PC-3 (cell line): ENCODE measurements at regions of chr20 and their contacts with region 1.

Region 1: GRCh38 chr20:53738039-53738944 is 144.7 kb upstream of the ZNF217 start:
- DNase-seq: peak; percentile 98
- ATAC-seq: peak; percentile 74
- H3K4me3 ChIP-seq: peak overlapping the region; percentile 61
- H3K27ac ChIP-seq: peak overlapping the region; percentile 87
- H3K4me1 ChIP-seq: peaks cover 70% of the 10 kb centered on the region
- H3K27me3 ChIP-seq: no peaks in the 10 kb centered on the region
- CTCF ChIP-seq: no peak

Region 2: DNA sequence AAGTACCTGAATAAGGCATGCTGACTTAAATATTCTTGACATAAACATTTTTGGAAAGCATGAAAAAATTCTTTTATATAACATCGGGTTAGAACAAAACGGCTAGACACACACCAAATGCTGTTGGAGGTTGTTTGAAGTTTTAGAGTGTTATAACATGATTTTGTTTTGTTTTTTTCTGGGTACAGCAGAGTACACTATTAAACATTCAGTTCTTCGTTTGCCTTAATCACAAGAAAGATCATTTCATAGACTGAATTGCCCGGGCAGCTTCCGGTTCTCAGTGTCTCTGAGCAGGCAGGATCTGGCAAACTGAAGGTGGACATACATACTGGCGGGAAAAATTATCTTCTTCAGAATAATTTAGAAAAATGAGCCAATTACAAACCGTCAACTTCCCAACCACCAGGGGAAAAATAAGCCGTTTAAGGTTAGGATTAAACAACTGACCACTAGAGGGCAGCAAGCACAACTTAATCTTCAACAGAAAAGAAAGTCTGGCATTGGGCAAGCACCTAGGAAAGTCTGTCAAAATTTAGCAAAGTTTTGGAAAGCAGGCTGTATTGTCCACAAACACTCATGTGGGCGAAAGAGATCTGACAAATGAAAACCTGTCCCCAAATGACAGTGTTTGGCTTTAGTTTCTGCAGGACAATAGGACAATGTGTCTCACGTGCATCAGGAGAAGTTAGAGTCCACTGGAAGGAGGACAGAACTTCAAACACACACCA is 159.6 kb before region 1 on chr20:
- CTCF ChIA-PET with region 1: no interaction called
- POLR2A ChIA-PET with region 1: interaction called, 3 read pairs
- intact Hi-C with region 1: loop called (anchors 5 kb)
- DNase-seq: peak; percentile 100
- ATAC-seq: peak; percentile 12
- H3K4me3 ChIP-seq: peak overlapping the region; percentile 75
- H3K27ac ChIP-seq: peak overlapping the region; percentile 88
- H3K4me1 ChIP-seq: peaks cover 59% of the 10 kb centered on the region
- H3K27me3 ChIP-seq: no peaks in the 10 kb centered on the region
- CTCF ChIP-seq: peak; percentile 99

Region 3: GRCh38 chr20:53623454-53624211 is 114.7 kb before region 1 on chr20:
- CTCF ChIA-PET with region 1: interaction called, 4 read pairs
- POLR2A ChIA-PET with region 1: interaction called, 28 read pairs
- intact Hi-C with region 1: loop called (anchors 1 kb)
- DNase-seq: peak; percentile 89
- ATAC-seq: peak; percentile 62
- H3K4me3 ChIP-seq: peak overlapping the region; percentile 63
- H3K27ac ChIP-seq: peak overlapping the region; percentile 89
- H3K4me1 ChIP-seq: peaks cover 41% of the 10 kb centered on the region
- H3K27me3 ChIP-seq: no peaks in the 10 kb centered on the region
- CTCF ChIP-seq: peak; percentile 38; the same call in 1 of the 2 replicates

Region 4: DNA sequence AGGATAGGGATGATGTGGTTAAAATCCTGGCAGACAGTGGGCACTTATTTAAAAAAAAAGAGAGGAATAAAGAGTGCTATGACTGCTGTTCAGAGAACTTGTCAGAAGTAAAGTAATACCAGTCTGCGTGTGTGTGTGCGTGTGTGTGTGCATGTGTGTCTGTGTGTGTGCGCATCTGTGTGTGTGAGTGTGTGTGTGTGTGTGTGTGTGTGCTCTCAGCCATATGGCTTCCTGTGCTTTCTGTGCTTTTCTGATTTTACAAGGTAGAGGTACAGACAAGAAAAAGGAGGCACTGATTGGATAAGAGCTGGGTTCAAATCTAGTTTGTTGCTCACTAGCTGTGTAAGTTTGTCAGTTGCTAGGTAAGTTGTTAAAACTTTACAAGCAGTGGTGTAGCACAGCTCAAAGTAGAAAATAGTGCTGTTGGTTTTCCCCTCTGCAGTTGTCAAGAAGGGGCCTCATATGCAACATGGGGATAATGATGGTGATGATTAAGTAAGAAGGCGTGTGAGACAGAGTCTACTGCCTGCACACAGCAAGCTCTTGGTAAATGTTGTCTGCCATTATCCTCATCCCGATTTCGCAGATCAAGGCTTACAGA is 10.6 kb after region 1 on chr20:
- CTCF ChIA-PET with region 1: no interaction called
- POLR2A ChIA-PET with region 1: interaction called, 14 read pairs
- intact Hi-C with region 1: loop called (anchors 1 kb)
- DNase-seq: peak; percentile 58
- ATAC-seq: no peak
- H3K4me3 ChIP-seq: no peak overlapping the region
- H3K27ac ChIP-seq: peak overlapping the region; percentile 47
- H3K4me1 ChIP-seq: peaks cover 56% of the 10 kb centered on the region
- H3K27me3 ChIP-seq: no peaks in the 10 kb centered on the region
- CTCF ChIP-seq: no peak

Region 5: DNA sequence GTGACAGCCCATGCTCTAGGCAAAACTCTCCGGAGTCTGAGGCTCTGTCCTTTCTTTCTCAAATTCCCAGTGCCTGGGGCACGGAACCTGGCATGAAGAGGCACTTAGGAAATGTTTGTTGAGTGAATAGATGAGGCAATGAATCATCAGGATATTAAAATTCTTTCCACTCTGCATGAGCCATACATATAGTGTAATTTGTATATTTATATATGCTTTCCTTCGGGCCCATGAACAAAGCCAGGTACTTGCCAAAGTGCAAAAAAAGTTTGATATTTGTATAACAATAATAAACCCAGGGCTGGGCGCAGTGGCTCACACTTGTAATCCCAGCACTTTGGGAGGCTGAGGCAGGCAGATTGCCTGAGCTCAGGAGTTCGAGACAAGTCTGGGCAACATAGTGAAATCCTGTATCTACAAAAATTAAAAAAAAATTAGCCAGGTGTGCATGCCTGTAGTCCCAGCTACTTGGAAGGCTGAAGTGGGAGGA is 67.6 kb after region 1 on chr20:
- CTCF ChIA-PET with region 1: no interaction called
- POLR2A ChIA-PET with region 1: interaction called, 5 read pairs
- intact Hi-C with region 1: loop called (anchors 5 kb)
- DNase-seq: peak; percentile 100
- ATAC-seq: peak; percentile 82
- H3K4me3 ChIP-seq: no peak overlapping the region
- H3K27ac ChIP-seq: peak overlapping the region; percentile 89
- H3K4me1 ChIP-seq: peaks cover 50% of the 10 kb centered on the region
- H3K27me3 ChIP-seq: no peaks in the 10 kb centered on the region
- CTCF ChIP-seq: no peak

Region 6: GRCh38 chr20:53915446-53916172 is 177.3 kb after region 1 on chr20:
- CTCF ChIA-PET with region 1: interaction called, 3 read pairs
- POLR2A ChIA-PET with region 1: interaction called, 5 read pairs
- intact Hi-C with region 1: loop called (anchors 2 kb)
- DNase-seq: peak; percentile 100
- ATAC-seq: peak; percentile 88
- H3K4me3 ChIP-seq: peak overlapping the region; percentile 72
- H3K27ac ChIP-seq: peak overlapping the region; percentile 84
- H3K4me1 ChIP-seq: peaks cover 48% of the 10 kb centered on the region
- H3K27me3 ChIP-seq: no peaks in the 10 kb centered on the region
- CTCF ChIP-seq: peak; percentile 99